ENCODE measurements at regions of chr10 and their contacts with region 1.

Region 1: DNA sequence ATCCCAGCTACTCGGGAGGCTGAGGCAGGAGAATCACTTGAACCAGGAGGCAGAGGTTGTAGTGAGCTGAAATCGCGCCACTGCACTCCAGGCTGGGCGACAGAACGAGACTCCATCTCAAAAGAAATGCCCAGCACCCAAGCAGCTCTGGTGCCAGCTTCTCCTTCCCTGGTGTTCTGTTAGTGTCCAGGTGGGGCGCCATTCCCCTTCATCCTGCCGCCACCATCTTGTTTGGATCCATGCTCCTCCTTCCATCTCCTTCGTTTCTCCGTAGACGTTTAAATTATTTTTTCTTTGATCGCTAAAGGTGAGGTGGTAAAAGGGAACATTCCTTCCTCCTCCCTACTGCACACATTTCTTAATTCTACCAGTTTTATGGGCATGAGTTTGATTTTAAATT is 30.3 kb downstream of the PROSER2 start:
- DNase-seq: no peak
- ATAC-seq: no peak
- H3K4me3 ChIP-seq: no peak overlapping the region
- H3K27ac ChIP-seq: no peak overlapping the region
- H3K4me1 ChIP-seq: no peaks in the 10 kb centered on the region
- H3K27me3 ChIP-seq: no peaks in the 10 kb centered on the region
- CTCF ChIP-seq: no peak

Region 2: GRCh38 chr10:11901833-11902475 is 48.5 kb after region 1 on chr10:
- intact Hi-C with region 1: loop called in 1 of 10 experiments (anchors 10 kb)
- DNase-seq: no peak
- ATAC-seq: peak in 6 of 8 donors; percentile 26 to 72 (median 52)
- H3K4me3 ChIP-seq: peak overlapping the region in 2 of 10 donors; percentile 1 to 4
- H3K27ac ChIP-seq: no peak overlapping the region
- H3K4me1 ChIP-seq: no peaks in the 10 kb centered on the region
- H3K27me3 ChIP-seq: peaks cover 0 to 25% (median 5%) of the 10 kb centered on the region in 7 donors
- CTCF ChIP-seq: no peak

Region 3: GRCh38 chr10:12699258-12699700 is 845.8 kb after region 1 on chr10:
- intact Hi-C with region 1: loop called in 1 of 10 experiments (anchors 5 kb)
- DNase-seq: peak in 1 of 2 donors; percentile 13
- ATAC-seq: peak in 7 of 8 donors; percentile 24 to 77 (median 62)
- H3K4me3 ChIP-seq: no peak overlapping the region
- H3K27ac ChIP-seq: peak overlapping the region in 8 of 10 donors; percentile 41 to 82 (median 68)
- H3K4me1 ChIP-seq: peaks cover 0 to 32% (median 3%) of the 10 kb centered on the region in 9 donors
- H3K27me3 ChIP-seq: no peaks in the 10 kb centered on the region
- CTCF ChIP-seq: no peak